Right ventricle myocardium superior (tissue), 1 donor: ENCODE measurements at regions of chr5 and their contacts with region 1.

Region 1: GRCh38 chr5:149834246-149834855 is 104.2 kb downstream of the PPARGC1B start:
- DNase-seq: no peak
- ATAC-seq: peak; percentile 38

Region 2: GRCh38 chr5:149656576-149657182 is 177.7 kb before region 1 on chr5:
- intact Hi-C with region 1: loop called (anchors 5 kb)
- DNase-seq: peak; percentile 74
- ATAC-seq: peak; percentile 53

Region 3: GRCh38 chr5:149680810-149681221 is 153.5 kb before region 1 on chr5:
- intact Hi-C with region 1: no loop called
- DNase-seq: peak; percentile 62
- ATAC-seq: peak; percentile 77

Region 4: GRCh38 chr5:149990518-149991376 is 156.4 kb after region 1 on chr5:
- intact Hi-C with region 1: loop called (anchors 5 kb)
- DNase-seq: peak; percentile 64
- ATAC-seq: peak; percentile 85